Heart right ventricle (tissue), 16 donors: ENCODE measurements at regions of chr22 and their contacts with region 1.

Region 1: GRCh38 chr22:17647991-17648390 is 9.4 kb downstream of the BCL2L13 start:
- DNase-seq: no peak
- ATAC-seq: no peak
- H3K4me3 ChIP-seq: no peak overlapping the region
- H3K27ac ChIP-seq: no peak overlapping the region
- H3K4me1 ChIP-seq: peaks cover 0 to 22% (median 0%) of the 10 kb centered on the region in 9 donors
- H3K27me3 ChIP-seq: no peaks in the 10 kb centered on the region
- CTCF ChIP-seq: no peak

Region 2: GRCh38 chr22:17597217-17597616 is 50.8 kb before region 1 on chr22:
- intact Hi-C with region 1: no loop called
- DNase-seq: no peak
- ATAC-seq: no peak
- H3K4me3 ChIP-seq: no peak overlapping the region
- H3K27ac ChIP-seq: no peak overlapping the region
- H3K4me1 ChIP-seq: no peaks in the 10 kb centered on the region
- H3K27me3 ChIP-seq: no peaks in the 10 kb centered on the region
- CTCF ChIP-seq: no peak

Region 3: DNA sequence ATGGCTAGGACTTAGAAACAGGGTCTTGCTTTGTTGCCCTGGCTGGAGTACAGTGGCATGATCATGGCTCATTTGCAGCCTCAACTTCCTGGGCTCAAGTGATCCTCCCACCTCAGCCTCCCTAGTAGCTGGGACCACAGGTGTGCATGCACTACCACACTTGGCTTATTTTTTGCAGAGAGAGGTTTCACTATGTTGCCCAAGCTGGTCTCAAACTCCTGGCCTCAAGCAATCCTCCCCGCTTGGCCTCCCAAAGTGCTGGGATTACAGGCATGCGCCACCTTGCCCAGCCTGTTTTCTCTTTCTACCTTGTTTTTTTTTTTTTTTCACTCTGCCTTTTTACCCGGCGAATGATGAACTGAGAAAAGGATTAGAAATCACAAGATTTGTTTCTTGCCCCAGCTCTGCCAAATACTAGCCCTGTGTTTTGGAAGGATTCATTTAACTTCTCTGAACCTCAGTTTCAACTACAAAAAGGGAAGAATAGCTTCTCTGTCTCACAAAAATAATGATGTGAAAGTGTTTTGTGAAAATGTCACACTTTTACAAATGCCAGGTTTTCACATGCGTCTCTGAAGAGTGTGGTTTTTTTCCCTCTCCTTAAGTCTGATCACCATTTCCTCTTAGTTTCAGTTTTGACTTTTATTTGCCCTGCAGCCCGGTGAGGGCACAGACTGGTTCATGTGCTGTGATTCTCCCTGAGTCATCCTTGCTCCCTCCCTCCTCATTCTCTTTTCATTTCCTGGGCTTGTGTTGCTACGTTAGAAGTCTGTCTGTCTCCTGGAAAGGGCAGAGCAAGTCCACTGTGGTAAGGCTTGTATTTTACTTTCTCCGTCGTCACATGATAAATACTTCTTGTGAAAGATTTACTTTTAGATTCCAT is 58.3 kb after region 1 on chr22:
- intact Hi-C with region 1: loop called in 1 of 10 experiments (anchors 10 kb)
- DNase-seq: peak in 1 of 2 donors; percentile 35
- ATAC-seq: peak; percentile 69 to 98 (median 88)
- H3K4me3 ChIP-seq: peak overlapping the region in 8 of 10 donors; percentile 1 to 40 (median 28)
- H3K27ac ChIP-seq: peak overlapping the region; percentile 0 to 78 (median 62)
- H3K4me1 ChIP-seq: peaks cover 0 to 26% (median 0%) of the 10 kb centered on the region in 9 donors
- H3K27me3 ChIP-seq: no peaks in the 10 kb centered on the region
- CTCF ChIP-seq: no peak

Region 4: DNA sequence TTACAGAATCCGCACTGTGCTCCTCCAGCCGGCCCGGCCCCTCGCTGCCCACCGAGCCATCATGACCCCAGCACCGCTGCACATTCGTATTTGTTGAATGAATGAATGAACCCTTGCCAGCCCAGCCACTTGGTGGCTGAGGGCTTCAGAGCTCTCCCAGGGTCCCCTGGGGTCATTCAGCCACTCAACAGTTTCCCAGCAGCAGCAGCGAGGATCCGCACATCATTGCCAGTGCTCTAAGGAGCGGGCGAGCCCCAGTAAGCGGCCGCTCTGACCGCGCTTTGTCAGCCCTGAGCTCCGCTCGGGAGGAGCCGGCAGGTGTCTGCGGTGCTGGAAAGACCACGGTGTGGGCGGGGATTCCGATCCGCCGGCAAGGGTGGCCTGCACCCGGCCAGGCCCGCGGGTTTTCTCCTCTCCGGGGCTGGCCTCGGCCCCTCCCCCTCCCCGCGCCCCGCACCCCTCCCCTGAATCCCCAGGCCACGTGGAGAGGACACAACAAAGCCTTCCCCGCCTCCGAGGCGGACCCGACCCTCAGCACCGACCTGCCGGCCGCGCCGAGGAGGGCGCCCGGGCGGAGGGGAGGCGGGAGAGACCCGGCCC is 125.7 kb after region 1 on chr22:
- intact Hi-C with region 1: no loop called
- DNase-seq: peak in 1 of 2 donors; percentile 44
- ATAC-seq: peak; percentile 29 to 52 (median 34)
- H3K4me3 ChIP-seq: peak overlapping the region; percentile 30 to 81 (median 73)
- H3K27ac ChIP-seq: peak overlapping the region; percentile 29 to 98 (median 73)
- H3K4me1 ChIP-seq: peaks cover 3 to 84% (median 20%) of the 10 kb centered on the region in 9 donors
- H3K27me3 ChIP-seq: no peaks in the 10 kb centered on the region
- CTCF ChIP-seq: no peak

Region 5: DNA sequence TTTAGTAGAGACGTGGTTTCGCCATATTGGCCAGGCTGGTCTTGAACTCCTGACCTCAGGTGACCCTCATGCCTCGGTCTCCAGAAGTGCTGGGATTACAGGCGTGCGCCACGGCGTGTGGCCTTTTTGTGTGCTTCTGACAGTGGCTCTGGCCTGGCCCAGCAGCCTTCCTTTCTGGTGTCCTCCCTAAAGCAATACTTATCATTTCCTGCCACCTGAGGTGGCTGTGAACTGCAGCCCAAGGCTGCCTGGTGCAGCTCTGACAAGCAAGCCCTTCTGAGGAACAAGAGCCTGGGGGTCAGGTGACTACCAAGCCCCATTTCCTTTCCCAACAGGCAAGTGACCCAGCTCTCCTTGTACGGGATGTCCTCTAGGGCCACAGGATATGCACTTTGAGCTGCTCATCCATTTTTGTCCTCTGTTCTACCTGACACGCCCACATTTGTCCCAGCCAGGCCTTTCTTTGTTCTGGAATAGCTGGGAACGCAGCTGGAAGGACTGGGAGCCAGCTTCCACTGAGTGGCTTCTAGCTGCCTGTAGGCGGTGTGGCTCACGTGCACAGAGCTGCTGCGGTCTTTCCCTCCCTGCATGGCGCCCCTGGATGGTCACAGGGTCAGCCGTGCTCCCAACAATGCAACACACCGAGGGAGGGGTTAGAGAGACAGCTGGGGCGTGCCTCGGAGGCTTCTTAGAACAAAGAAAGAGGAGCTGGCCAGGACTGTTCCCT is 138.6 kb after region 1 on chr22:
- intact Hi-C with region 1: no loop called
- DNase-seq: peak; percentile 75 to 83
- ATAC-seq: peak; percentile 72 to 92 (median 85)
- H3K4me3 ChIP-seq: no peak overlapping the region
- H3K27ac ChIP-seq: peak overlapping the region; percentile 69 to 93 (median 84)
- H3K4me1 ChIP-seq: peaks cover 11 to 39% (median 30%) of the 10 kb centered on the region in 9 donors
- H3K27me3 ChIP-seq: no peaks in the 10 kb centered on the region
- CTCF ChIP-seq: peak in 7 of 9 donors; percentile 5 to 39 (median 15)